Left cardiac atrium (tissue), 4 donors: ENCODE measurements at regions of chr1 and their contacts with region 1.

Region 1: GRCh38 chr1:100606438-100606837 is 68.5 kb downstream of the GPR88 start:
- DNase-seq: peak; percentile 44
- ATAC-seq: peak; percentile 91 to 94

Region 2: DNA sequence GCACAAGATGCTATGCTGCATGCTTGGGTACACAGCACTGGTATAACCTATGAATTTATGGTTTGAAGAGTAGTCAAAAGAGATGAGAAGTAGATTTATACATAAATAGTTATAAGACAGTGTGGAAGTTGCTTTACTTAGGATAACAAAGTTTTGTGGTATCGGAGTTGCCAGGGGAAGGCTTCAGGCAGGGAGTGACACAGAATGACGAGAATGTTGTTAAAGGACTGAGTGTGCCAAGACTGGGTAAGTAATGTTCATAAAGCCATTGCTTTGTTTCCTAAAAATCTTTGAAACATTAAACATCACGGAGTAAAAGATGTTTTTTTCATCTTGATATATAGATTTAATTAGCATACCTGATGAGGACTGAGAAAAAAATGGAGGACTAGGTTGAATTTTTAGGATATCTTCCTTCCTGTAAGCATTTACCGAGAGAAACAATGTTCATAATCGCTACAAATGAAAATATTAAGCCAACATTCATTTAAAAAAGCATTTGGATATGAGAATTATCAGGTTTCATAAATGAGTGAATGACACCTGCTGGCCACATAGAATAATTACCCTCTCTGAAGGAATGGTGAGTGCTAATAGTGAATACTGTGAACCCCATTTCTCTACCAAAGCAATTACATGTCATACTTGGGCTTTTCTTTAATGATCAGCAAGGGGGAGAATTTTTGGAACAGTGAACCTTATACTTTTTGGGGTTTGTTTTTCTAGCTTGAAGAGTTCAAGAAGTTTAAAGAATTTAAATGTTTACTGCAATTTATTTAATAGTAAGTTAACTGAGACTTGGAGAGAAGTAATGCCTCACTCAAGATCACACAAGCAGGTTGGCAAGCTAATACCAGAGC is 259.8 kb after region 1 on chr1:
- intact Hi-C with region 1: loop called (anchors 2 to 5 kb)
- DNase-seq: no peak
- ATAC-seq: peak; percentile 62 to 70

Region 3: GRCh38 chr1:101071470-101071891 is 465.0 kb after region 1 on chr1:
- intact Hi-C with region 1: no loop called
- DNase-seq: no peak
- ATAC-seq: no peak